ENCODE measurements at regions of chr19 and their contacts with region 1.

Region 1: GRCh38 chr19:18251587-18252369 is 22.5 kb downstream of the IQCN start:
- DNase-seq: peak; percentile 69 to 71
- ATAC-seq: peak; percentile 58 to 81 (median 72)
- H3K4me3 ChIP-seq: no peak overlapping the region
- H3K27ac ChIP-seq: no peak overlapping the region
- H3K4me1 ChIP-seq: peaks cover 0 to 10% (median 0%) of the 10 kb centered on the region in 9 donors
- H3K27me3 ChIP-seq: peaks cover 0 to 16% (median 10%) of the 10 kb centered on the region in 7 donors
- CTCF ChIP-seq: peak; percentile 89 to 94 (median 92)

Region 2: DNA sequence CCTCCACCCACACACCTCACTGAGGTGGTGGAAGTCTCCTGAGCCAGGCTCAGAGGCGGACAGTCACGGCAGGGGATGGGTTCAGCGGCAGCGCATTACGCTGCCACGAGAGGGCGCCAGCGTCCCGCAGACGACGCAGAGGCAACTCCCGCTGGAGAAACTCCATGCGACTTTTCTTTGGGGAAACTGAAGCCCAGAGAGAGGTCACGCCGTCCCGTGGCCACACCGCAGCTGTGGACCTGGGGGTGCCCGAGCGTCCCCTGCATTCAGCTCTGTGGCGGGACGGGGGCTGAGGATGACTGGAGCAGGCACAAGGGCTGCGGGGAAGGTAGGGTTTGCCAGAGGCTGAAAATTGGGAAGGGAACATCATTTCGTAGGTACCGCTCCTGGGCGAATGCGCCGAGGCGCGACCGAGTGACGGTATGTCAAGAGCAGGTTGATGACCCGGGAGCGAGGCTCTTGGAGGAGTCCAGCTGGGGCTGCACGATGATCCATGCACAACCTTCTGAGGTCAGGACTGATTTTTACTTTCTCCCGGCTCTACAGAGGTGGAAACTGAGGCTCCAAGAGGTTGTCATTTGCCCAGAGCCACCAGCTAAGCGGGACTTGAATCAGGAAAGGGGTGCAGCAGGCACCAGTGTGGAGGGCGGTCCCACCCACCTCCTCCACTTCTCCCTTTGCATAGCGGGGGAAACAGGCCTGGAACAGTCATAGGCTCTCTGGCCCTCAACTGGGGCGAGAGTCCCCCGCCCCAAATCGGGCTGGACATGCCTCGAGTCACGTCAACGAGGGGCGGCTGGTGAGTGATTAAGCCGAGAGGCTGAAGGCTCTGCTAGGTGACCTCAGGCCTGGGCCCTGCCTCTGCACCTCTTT is 244.5 kb before region 1 on chr19:
- intact Hi-C with region 1: loop called in 1 of 10 experiments (anchors 5 kb)
- DNase-seq: peak; percentile 82 to 88
- ATAC-seq: peak; percentile 81 to 96 (median 90)
- H3K4me3 ChIP-seq: peak overlapping the region; percentile 37 to 77 (median 58)
- H3K27ac ChIP-seq: peak overlapping the region; percentile 70 to 91 (median 88)
- H3K4me1 ChIP-seq: peaks cover 0 to 44% (median 29%) of the 10 kb centered on the region in 9 donors
- H3K27me3 ChIP-seq: no peaks in the 10 kb centered on the region
- CTCF ChIP-seq: peak; percentile 96 to 100 (median 99)

Region 3: GRCh38 chr19:18097217-18097992 is 154.4 kb before region 1 on chr19 and contains the start of gene MAST3:
- intact Hi-C with region 1: no loop called
- DNase-seq: peak; percentile 59 to 82
- ATAC-seq: peak; percentile 88 to 96 (median 90)
- H3K4me3 ChIP-seq: peak within 1 kb of the TSS in 9 of 10 donors; percentile 1 to 63 (median 47)
- H3K27ac ChIP-seq: peak within 1 kb of the TSS in 1 of 10 donors; percentile 65
- H3K4me1 ChIP-seq: peaks cover 0 to 23% (median 14%) of the 10 kb centered on the region in 9 donors
- H3K27me3 ChIP-seq: peaks cover 0 to 54% (median 34%) of the 10 kb centered on the region in 7 donors
- CTCF ChIP-seq: no peak
- total RNA-seq, gene MAST3: 2.8 to 6.4 (median 4.6) TPM

Region 4: DNA sequence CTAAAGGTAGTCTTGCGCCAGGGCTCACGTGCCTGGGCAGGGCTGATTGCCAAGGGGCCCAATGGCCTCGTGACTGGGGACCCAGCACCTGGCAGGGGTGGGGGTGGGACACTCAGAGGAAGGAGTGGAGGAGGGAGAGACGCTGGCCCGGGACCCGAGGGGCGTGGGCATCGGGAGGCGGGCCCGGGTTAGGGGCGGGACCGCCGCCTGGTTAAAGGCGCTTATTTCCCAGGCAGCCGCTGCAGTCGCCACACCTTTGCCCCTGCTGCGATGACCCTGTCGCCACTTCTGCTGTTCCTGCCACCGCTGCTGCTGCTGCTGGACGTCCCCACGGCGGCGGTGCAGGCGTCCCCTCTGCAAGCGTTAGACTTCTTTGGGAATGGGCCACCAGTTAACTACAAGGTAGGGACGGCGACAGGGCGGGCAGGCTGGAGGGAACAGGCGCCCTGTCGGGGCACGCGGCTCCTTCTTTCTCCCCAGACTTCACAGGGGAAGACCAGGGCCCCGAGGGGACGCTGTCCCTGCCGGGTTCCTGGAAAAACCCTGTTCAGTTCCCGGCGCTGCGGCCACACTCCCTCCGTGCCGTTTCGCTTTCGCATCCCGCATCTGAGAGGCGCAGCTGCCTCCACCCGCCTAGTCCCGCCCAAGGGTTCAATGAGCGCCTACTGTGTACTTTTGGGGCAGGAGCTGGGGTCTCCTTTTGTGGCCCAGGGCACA is 78.0 kb before region 1 on chr19 and contains the start of gene IFI30:
- intact Hi-C with region 1: no loop called
- DNase-seq: peak; percentile 65 to 75
- ATAC-seq: peak; percentile 63 to 83 (median 77)
- H3K4me3 ChIP-seq: peak within 1 kb of the TSS; percentile 47 to 91 (median 68)
- H3K27ac ChIP-seq: peak within 1 kb of the TSS in 9 of 10 donors; percentile 5 to 96 (median 66)
- H3K4me1 ChIP-seq: peaks cover 0 to 87% (median 19%) of the 10 kb centered on the region in 9 donors
- H3K27me3 ChIP-seq: no peaks in the 10 kb centered on the region
- CTCF ChIP-seq: no peak
- total RNA-seq, gene IFI30: 6.5 to 241 (median 11.9) TPM

Region 5: DNA sequence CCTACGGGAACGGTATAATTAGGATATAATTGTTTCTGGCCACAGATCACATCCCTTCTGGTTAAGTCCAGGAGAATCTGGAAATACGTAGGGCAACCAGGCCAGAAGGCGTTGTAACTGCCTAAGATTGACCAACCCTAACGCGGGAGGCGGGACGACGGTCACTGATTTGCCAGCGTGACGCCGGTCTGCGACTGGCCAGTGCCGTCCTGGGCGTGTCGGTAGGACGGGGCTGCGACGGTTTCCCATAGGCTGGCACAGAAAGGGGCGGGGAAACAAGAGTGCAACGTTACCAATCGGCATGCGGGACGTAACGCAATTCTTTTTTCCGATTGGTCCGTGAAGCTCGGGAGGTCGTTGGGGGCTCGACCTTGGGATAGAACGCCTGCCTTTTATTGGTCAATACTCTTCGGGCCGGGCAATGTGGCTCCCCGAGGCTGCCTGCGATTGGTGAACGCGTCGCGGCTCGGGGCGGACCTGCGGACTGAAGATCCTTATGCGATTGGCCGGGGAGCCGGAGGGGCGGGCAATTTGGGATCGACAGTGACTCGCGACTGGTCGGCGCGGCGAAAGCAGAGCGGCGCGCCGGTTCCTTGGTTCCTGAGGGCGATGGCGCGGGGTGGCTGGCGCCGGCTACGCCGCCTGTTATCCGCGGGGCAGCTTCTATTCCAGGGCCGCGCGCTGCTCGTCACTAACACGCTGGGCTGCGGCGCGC is 58.9 kb before region 1 on chr19 and contains the start of gene MPV17L2:
- intact Hi-C with region 1: loop called in 3 of 10 experiments (anchors 1 to 5 kb)
- DNase-seq: peak; percentile 99 to 100
- ATAC-seq: peak; percentile 93 to 98 (median 96)
- H3K4me3 ChIP-seq: peak within 1 kb of the TSS; percentile 65 to 98 (median 82)
- H3K27ac ChIP-seq: peak within 1 kb of the TSS; percentile 69 to 97 (median 94)
- H3K4me1 ChIP-seq: peaks cover 8 to 34% (median 19%) of the 10 kb centered on the region in 9 donors
- H3K27me3 ChIP-seq: no peaks in the 10 kb centered on the region
- CTCF ChIP-seq: no peak
- total RNA-seq, gene MPV17L2: 10.6 to 16.5 (median 14.5) TPM

Region 6: GRCh38 chr19:18214779-18215433 is 36.9 kb before region 1 on chr19:
- intact Hi-C with region 1: loop called in 4 of 10 experiments (anchors 5 kb)
- DNase-seq: no peak
- ATAC-seq: no peak
- H3K4me3 ChIP-seq: no peak overlapping the region
- H3K27ac ChIP-seq: no peak overlapping the region
- H3K4me1 ChIP-seq: no peaks in the 10 kb centered on the region
- H3K27me3 ChIP-seq: peaks cover 0 to 11% (median 0%) of the 10 kb centered on the region in 7 donors
- CTCF ChIP-seq: no peak

Region 7: GRCh38 chr19:18317918-18318841 is 66.4 kb after region 1 on chr19:
- intact Hi-C with region 1: no loop called
- DNase-seq: peak in 1 of 2 donors; percentile 30
- ATAC-seq: peak; percentile 2 to 24 (median 12)
- H3K4me3 ChIP-seq: peak overlapping the region in 2 of 10 donors; percentile 6 to 22
- H3K27ac ChIP-seq: peak overlapping the region in 9 of 10 donors; percentile 67 to 98 (median 83)
- H3K4me1 ChIP-seq: peaks cover 0 to 56% (median 50%) of the 10 kb centered on the region in 9 donors
- H3K27me3 ChIP-seq: no peaks in the 10 kb centered on the region
- CTCF ChIP-seq: no peak